ENCODE measurements at regions of chr14 and their contacts with region 1.

Region 1: GRCh38 chr14:102096214-102097114 is 9.6 kb upstream of the HSP90AA1 start:
- DNase-seq: peak; percentile 70 to 88
- H3K4me3 ChIP-seq: peak overlapping the region; percentile 11; the same call in 1 of the 2 replicates
- H3K27ac ChIP-seq: peak overlapping the region; percentile 61
- H3K4me1 ChIP-seq: peaks cover 43% of the 10 kb centered on the region
- H3K27me3 ChIP-seq: no peaks in the 10 kb centered on the region
- CTCF ChIP-seq: peak; percentile 98

Region 2: DNA sequence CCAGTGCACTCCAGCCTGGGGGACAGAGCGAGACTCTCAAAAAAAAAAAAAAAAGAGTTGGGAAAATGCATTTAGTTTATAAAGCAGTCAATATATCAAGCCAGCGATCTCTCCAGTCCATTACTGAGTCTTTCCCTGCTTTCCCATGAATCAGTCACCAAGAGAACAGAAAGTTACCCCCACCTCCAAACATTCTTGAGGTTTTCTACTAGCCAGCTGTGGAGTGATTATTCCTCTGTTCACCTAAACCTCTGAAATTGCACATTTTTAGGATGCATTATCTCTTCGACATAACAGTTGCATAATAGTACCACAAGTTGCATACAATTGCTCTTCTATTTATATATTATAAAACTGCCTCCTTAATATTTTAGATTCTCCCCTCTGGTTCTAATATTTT is 670.0 kb before region 1 on chr14:
- CTCF ChIA-PET with region 1: no interaction called
- POLR2A ChIA-PET with region 1: no interaction called
- intact Hi-C with region 1: no loop called
- DNase-seq: no peak
- H3K4me3 ChIP-seq: no peak overlapping the region
- H3K27ac ChIP-seq: no peak overlapping the region
- H3K4me1 ChIP-seq: no peaks in the 10 kb centered on the region
- H3K27me3 ChIP-seq: no peaks in the 10 kb centered on the region
- CTCF ChIP-seq: no peak

Region 3: GRCh38 chr14:101707068-101707842 is 389.2 kb before region 1 on chr14:
- CTCF ChIA-PET with region 1: no interaction called
- POLR2A ChIA-PET with region 1: interaction called, 5 read pairs
- intact Hi-C with region 1: loop called (anchors 5 kb)
- DNase-seq: peak; percentile 74 to 87
- H3K4me3 ChIP-seq: no peak overlapping the region
- H3K27ac ChIP-seq: peak overlapping the region; percentile 48; the same call in 1 of the 2 replicates
- H3K4me1 ChIP-seq: peaks cover 34% of the 10 kb centered on the region
- H3K27me3 ChIP-seq: no peaks in the 10 kb centered on the region
- CTCF ChIP-seq: peak; percentile 100

Region 4: DNA sequence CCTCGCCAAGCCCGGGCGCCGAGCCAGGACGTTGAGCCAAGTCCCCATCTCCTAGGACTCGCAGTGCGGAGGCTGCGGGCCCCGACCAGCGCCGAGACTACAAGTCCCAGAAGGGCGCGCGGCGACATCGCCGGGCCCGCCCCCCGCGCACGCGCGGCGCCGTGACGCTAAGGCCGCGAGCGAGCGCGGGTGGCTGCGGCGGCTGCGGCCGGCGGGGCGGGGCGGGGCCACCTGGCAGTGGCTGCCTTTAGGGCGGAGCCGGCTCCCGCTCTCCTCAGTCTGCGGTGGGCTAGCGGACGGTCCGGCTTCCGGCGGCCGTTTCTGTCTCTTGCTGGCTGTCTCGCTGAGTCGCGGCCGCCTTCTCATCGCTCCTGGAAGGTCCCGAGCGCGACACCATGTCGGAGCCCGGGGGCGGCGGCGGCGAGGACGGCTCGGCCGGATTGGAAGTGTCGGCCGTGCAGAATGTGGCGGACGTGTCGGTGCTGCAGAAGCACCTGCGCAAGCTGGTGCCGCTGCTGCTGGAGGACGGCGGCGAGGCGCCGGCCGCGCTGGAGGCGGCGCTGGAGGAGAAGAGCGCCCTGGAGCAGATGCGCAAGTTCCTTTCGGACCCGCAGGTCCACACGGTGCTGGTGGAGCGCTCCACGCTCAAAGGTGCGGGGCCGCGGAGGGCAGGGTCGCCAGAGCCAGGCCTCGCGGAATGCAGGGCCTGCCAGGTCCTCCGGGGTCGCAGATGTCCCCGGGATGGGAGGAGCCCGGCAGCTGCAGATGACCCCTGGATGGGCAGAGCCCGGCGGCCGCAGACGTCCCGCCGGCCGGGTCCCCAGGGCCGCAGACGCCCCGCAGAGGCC is 131.9 kb before region 1 on chr14 and contains the start of gene DYNC1H1:
- CTCF ChIA-PET with region 1: interaction called, 5 read pairs
- POLR2A ChIA-PET with region 1: no interaction called
- intact Hi-C with region 1: loop called (anchors 1 kb)
- DNase-seq: peak; percentile 83 to 99
- H3K4me3 ChIP-seq: peak within 1 kb of the TSS; percentile 76
- H3K27ac ChIP-seq: peak within 1 kb of the TSS; percentile 75
- H3K4me1 ChIP-seq: peaks cover 59% of the 10 kb centered on the region
- H3K27me3 ChIP-seq: no peaks in the 10 kb centered on the region
- CTCF ChIP-seq: no peak; the same call in 1 of the 2 replicates
- total RNA-seq, gene DYNC1H1: 1,203 and 1,268 TPM in 2 replicates

Region 5: GRCh38 chr14:102034301-102034700 is 62.2 kb before region 1 on chr14:
- CTCF ChIA-PET with region 1: interaction called, 6 read pairs
- POLR2A ChIA-PET with region 1: interaction called, 7 read pairs
- intact Hi-C with region 1: loop called (anchors 1 kb)
- DNase-seq: peak; percentile 95 to 99
- H3K4me3 ChIP-seq: no peak overlapping the region
- H3K27ac ChIP-seq: peak overlapping the region; percentile 56
- H3K4me1 ChIP-seq: peaks cover 38% of the 10 kb centered on the region
- H3K27me3 ChIP-seq: no peaks in the 10 kb centered on the region
- CTCF ChIP-seq: no peak

Region 6: GRCh38 chr14:102111101-102111500 is 14.6 kb after region 1 on chr14:
- CTCF ChIA-PET with region 1: no interaction called
- POLR2A ChIA-PET with region 1: interaction called, 10 read pairs
- intact Hi-C with region 1: no loop called
- DNase-seq: no peak
- H3K4me3 ChIP-seq: no peak overlapping the region
- H3K27ac ChIP-seq: no peak overlapping the region
- H3K4me1 ChIP-seq: no peaks in the 10 kb centered on the region
- H3K27me3 ChIP-seq: no peaks in the 10 kb centered on the region
- CTCF ChIP-seq: no peak

Region 7: GRCh38 chr14:102187058-102187457 is 90.6 kb after region 1 on chr14:
- CTCF ChIA-PET with region 1: interaction called, 4 read pairs
- POLR2A ChIA-PET with region 1: interaction called, 8 read pairs
- intact Hi-C with region 1: loop called (anchors 1 kb)
- DNase-seq: peak; percentile 56 to 98
- H3K4me3 ChIP-seq: peak overlapping the region; percentile 31; the same call in 1 of the 2 replicates
- H3K27ac ChIP-seq: peak overlapping the region; percentile 90
- H3K4me1 ChIP-seq: peaks cover 61% of the 10 kb centered on the region
- H3K27me3 ChIP-seq: no peaks in the 10 kb centered on the region
- CTCF ChIP-seq: no peak

Region 8: GRCh38 chr14:102316743-102317563 is 220.5 kb after region 1 on chr14:
- CTCF ChIA-PET with region 1: interaction called, 4 read pairs
- POLR2A ChIA-PET with region 1: no interaction called
- intact Hi-C with region 1: loop called (anchors 2 kb)
- DNase-seq: peak; percentile 85 to 91
- H3K4me3 ChIP-seq: peak overlapping the region; percentile 69
- H3K27ac ChIP-seq: peak overlapping the region; percentile 69
- H3K4me1 ChIP-seq: peaks cover 42% of the 10 kb centered on the region
- H3K27me3 ChIP-seq: no peaks in the 10 kb centered on the region
- CTCF ChIP-seq: peak; percentile 43